ENCODE measurements at regions of chr6 and their contacts with region 1.

Region 1: GRCh38 chr6:90472744-90473143 is 114.1 kb downstream of the MAP3K7 start:
- DNase-seq: peak in 6 of 9 donors; percentile 33 to 50 (median 37)
- ATAC-seq: peak; percentile 51
- H3K4me3 ChIP-seq: peak overlapping the region; percentile 21
- H3K4me3 Mint-ChIP-seq: peak overlapping the region; percentile 50 to 72 (median 69)
- H3K27ac ChIP-seq: no peak overlapping the region
- H3K27ac Mint-ChIP-seq: peak overlapping the region in 4 of 9 donors; percentile 28 to 90 (median 62)
- H3K4me1 ChIP-seq: peaks cover 22 to 34% of the 10 kb centered on the region in 2 donors
- H3K4me1 Mint-ChIP-seq: peaks cover 20 to 96% (median 48%) of the 10 kb centered on the region in 7 donors
- H3K27me3 ChIP-seq: no peaks in the 10 kb centered on the region
- H3K27me3 Mint-ChIP-seq: peaks cover 0 to 2% (median 0%) of the 10 kb centered on the region in 5 donors

Region 2: DNA sequence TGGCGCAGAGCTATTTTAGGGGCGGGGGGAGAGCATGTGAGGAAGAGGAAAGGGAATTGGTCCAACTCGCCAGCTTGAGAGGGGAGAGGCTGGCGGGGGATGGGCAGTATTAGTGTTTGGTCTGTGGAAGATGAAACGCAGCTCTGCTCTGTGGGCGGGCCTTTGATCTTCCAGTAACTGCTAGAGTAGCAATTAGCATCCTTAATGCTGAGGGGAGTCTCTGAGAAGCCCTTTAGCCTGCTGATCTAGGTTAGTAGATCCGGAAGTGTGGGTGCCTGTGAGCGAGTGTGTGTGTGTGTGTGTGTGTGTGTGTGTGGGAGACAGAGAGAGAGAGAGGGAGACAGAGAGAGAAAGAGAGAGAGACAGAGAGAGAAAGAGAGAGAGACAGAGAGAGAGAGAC is 58.9 kb before region 1 on chr6:
- CTCF ChIA-PET with region 1: interaction called, 3 read pairs
- POLR2A ChIA-PET with region 1: no interaction called
- intact Hi-C with region 1: loop called in 1 of 2 experiments (anchors 5 kb)
- DNase-seq: peak; percentile 29 to 83 (median 75)
- ATAC-seq: peak; percentile 95
- H3K4me3 ChIP-seq: peak overlapping the region; percentile 40
- H3K4me3 Mint-ChIP-seq: peak overlapping the region; percentile 70 to 87 (median 75)
- H3K27ac ChIP-seq: no peak overlapping the region
- H3K27ac Mint-ChIP-seq: peak overlapping the region; percentile 63 to 96 (median 91)
- H3K4me1 ChIP-seq: peaks cover 16 to 30% of the 10 kb centered on the region in 2 donors
- H3K4me1 Mint-ChIP-seq: peaks cover 15 to 68% (median 26%) of the 10 kb centered on the region in 7 donors
- H3K27me3 ChIP-seq: no peaks in the 10 kb centered on the region
- H3K27me3 Mint-ChIP-seq: peaks cover 0 to 2% (median 0%) of the 10 kb centered on the region in 5 donors

Region 3: GRCh38 chr6:90425161-90425641 is 47.5 kb before region 1 on chr6:
- CTCF ChIA-PET with region 1: interaction called, 3 read pairs
- POLR2A ChIA-PET with region 1: no interaction called
- intact Hi-C with region 1: loop called in 1 of 2 experiments (anchors 1 kb)
- DNase-seq: peak in 6 of 9 donors; percentile 19 to 47 (median 42)
- ATAC-seq: peak; percentile 86
- H3K4me3 ChIP-seq: peak overlapping the region; percentile 32
- H3K4me3 Mint-ChIP-seq: peak overlapping the region; percentile 63 to 85 (median 78)
- H3K27ac ChIP-seq: peak overlapping the region; percentile 53
- H3K27ac Mint-ChIP-seq: peak overlapping the region; percentile 87 to 97 (median 92)
- H3K4me1 ChIP-seq: peaks cover 0 to 10% of the 10 kb centered on the region in 2 donors
- H3K4me1 Mint-ChIP-seq: peaks cover 12 to 25% (median 18%) of the 10 kb centered on the region in 7 donors
- H3K27me3 ChIP-seq: no peaks in the 10 kb centered on the region
- H3K27me3 Mint-ChIP-seq: no peaks in the 10 kb centered on the region

Region 4: DNA sequence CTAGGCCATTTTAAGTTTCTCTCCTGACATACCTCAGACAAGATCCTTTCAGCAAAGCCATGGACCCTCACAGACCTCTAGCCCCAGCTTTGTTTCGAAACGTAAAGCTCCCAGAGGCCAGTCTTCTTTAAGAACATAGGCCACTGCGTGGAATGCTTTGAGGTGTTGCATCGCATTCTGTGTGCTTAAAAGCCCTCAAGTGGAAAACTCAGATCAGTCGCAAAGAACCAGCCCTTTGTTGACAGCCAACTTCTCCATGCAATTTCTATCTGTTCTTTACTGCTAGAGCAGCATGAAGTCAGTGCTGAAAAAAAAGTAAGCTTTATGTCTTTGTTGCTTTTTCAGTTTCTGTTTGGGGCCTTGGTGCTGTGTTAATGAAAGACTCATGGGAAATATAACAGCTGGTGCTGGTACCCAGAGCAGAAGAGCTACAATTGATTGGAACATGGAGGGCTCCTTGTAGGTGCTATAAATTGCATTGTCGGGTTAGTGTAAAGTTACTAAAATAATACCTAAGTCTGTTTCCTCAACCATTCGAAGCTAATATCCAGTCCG is 28.5 kb before region 1 on chr6:
- CTCF ChIA-PET with region 1: interaction called, 3 read pairs
- POLR2A ChIA-PET with region 1: no interaction called
- intact Hi-C with region 1: loop called (anchors 2 kb)
- DNase-seq: peak in 1 of 9 donors; percentile 9
- ATAC-seq: no peak
- H3K4me3 ChIP-seq: no peak overlapping the region
- H3K4me3 Mint-ChIP-seq: peak overlapping the region in 8 of 10 donors; percentile 28 to 72 (median 50)
- H3K27ac ChIP-seq: no peak overlapping the region
- H3K27ac Mint-ChIP-seq: peak overlapping the region in 5 of 9 donors; percentile 25 to 78 (median 62)
- H3K4me1 ChIP-seq: no peaks in the 10 kb centered on the region
- H3K4me1 Mint-ChIP-seq: peaks cover 8 to 49% (median 19%) of the 10 kb centered on the region in 7 donors
- H3K27me3 ChIP-seq: no peaks in the 10 kb centered on the region
- H3K27me3 Mint-ChIP-seq: no peaks in the 10 kb centered on the region

Region 5: DNA sequence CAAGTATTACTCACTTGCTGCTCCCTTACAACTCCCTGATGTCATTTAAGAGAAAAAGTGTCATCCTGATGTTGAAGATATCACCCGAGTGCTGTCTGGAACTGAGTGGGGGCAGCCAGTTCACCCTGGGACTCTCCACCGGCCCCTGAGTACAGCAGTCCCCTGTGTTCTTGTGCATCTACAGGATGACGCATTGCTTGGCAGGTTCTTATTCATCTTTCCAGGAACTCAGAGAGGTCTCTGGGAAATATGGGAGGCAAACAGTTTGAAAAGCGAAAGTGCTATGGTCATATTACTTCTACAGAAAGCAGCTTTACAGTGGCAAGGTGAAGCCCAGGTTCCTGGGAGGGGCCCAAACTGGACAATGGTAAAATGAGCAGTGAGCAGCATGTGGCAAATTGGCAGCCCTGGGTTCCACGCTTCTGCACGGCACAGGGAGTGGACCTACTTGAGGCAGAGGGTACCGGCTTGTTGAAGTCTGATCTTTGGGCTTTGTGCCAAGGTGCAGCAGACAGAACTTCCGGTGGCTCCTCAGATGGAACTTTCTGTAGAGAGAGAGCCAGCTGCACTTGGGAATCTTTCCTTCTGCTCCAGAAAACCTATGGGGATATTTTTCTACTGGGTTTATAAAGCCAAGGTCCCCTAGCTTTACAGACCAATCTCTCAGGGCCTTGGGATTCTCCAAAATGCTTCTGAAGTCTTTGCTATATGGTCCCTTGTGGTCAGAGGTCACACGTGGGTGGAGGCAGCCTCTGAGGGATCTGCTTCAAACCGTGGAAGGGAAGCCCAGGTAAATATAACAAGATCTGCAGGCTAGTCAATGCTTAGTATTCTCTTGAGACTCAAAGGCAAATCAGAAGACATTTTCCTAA is 14.2 kb before region 1 on chr6:
- CTCF ChIA-PET with region 1: interaction called, 3 read pairs
- POLR2A ChIA-PET with region 1: interaction called, 6 read pairs
- intact Hi-C with region 1: loop called (anchors 1 kb)
- DNase-seq: peak in 6 of 9 donors; percentile 37 to 74 (median 48)
- ATAC-seq: peak; percentile 70
- H3K4me3 ChIP-seq: peak overlapping the region; percentile 26
- H3K4me3 Mint-ChIP-seq: peak overlapping the region in 9 of 10 donors; percentile 45 to 82 (median 74)
- H3K27ac ChIP-seq: no peak overlapping the region
- H3K27ac Mint-ChIP-seq: peak overlapping the region in 8 of 9 donors; percentile 21 to 91 (median 80)
- H3K4me1 ChIP-seq: peaks cover 25 to 30% of the 10 kb centered on the region in 2 donors
- H3K4me1 Mint-ChIP-seq: peaks cover 23 to 65% (median 47%) of the 10 kb centered on the region in 7 donors
- H3K27me3 ChIP-seq: no peaks in the 10 kb centered on the region
- H3K27me3 Mint-ChIP-seq: no peaks in the 10 kb centered on the region